GM18951 (cell line): ENCODE measurements at regions of chr2 and their contacts with region 1.

Region 1: GRCh38 chr2:98385050-98385699 is 38.9 kb downstream of the CNGA3 start:
- POLR2A ChIP-seq: no peak

Region 2: GRCh38 chr2:97806738-97807618 is 578.2 kb before region 1 on chr2:
- in situ Hi-C with region 1: loop called (anchors 25 kb)
- POLR2A ChIP-seq: no peak

Region 3: DNA sequence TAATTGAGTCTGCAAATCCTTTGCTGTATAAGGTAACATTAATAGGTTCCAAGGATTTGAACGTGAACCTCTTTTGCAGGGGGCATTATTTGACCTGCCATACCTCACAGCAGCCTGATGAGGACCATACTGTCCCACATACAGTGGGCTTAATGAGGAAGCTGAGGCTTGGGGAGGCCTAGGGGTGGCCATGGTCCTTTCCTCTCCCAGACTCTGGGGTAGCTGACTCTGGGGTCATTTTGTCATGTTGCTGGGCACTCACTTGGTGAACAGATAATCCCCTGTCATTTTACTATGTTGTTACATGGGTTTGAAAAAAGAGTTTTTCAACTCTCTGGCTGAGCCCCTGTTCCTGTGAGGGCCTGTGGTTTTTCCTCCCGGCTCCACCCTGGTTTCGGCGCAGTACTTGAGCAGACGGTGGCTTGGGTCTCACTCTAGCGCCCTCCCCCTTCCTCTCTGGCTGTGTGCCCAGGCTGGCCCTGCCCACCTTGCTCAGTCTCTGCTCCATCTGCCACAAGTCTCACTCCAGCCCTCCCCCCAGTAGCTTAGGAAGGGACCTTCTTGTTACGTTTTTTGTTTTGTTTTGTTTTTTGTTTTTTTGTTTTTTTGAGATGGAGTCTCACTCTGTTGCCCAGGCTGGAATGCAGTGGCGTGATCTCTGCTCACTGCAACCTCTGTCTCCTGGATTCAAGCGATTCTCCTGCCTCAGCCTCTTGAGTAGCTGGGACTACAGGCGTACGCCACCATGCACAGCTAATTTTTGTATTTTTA is 80.5 kb after region 1 on chr2:
- in situ Hi-C with region 1: no loop called
- POLR2A ChIP-seq: no peak